A549 (cell line): ENCODE measurements at regions of chr20 and their contacts with region 1.

Region 1: DNA sequence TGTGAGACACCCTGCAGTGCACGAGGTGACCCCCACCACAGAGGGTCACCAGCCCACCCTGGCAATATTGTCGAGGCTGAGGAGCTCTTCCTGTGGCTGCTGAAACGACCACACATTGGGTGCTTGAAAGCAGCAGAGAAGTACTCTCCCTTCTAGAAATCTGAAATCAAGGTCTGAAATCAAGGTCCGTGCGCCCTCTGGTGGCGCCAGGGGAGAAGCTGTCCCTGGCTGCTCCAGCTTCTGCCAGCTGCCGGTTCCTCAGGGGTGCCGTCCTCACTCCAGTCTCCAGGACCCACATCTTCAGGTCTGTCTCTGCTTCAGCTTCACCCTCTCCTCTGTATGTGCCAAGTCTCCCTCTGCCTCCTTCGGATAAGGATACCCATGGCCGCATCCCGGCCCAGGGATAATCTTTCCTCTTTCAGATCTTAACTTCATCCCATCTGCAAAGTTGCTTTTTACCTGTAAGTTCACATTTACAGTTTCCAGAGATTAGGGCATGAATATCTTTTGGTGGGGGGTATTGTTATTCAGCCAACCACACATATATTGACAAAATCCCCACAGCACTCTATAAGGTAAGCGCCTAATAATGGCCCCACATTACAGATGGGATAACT is 108.3 kb upstream of the PHACTR3 start:
- DNase-seq: peak; percentile 67 to 71
- ATAC-seq: peak; percentile 91 to 95
- H3K4me3 ChIP-seq: no peak overlapping the region
- H3K27ac ChIP-seq: no peak overlapping the region
- H3K4me1 ChIP-seq: no peaks in the 10 kb centered on the region
- CTCF ChIP-seq: peak; percentile 85
- EP300 ChIP-seq: no peak
- POLR2A ChIP-seq: no peak
- RAD21 ChIP-seq: peak; percentile 70 to 74

Region 2: DNA sequence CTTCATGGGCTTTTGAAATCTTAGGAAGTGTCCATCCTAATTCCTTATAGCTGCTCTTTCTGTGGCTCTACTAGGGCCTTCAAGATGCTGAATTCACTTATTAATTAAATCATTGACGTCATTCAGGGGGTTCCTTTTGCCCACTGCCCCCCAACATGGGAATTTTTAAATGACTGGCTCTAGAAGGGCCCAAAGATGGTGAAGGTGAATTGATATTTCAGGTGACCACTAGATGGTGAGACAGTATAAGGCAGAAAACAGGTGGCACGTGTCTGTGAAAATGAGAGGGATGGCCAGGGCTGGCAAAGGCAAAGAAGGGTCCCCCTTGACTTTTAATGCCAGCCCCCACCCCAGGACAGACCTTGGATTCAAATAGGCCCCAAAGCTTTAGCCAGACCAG is 631.7 kb before region 1 on chr20:
- CTCF ChIA-PET with region 1: interaction called, 31 read pairs
- POLR2A ChIA-PET with region 1: no interaction called
- DNase-seq: no peak
- ATAC-seq: peak; percentile 57 to 77; a peak in 3 of 6 replicates
- H3K4me3 ChIP-seq: no peak overlapping the region
- H3K27ac ChIP-seq: no peak overlapping the region
- H3K4me1 ChIP-seq: no peaks in the 10 kb centered on the region
- CTCF ChIP-seq: peak; percentile 40
- EP300 ChIP-seq: no peak
- POLR2A ChIP-seq: no peak
- RAD21 ChIP-seq: peak; percentile 59 to 63

Region 3: DNA sequence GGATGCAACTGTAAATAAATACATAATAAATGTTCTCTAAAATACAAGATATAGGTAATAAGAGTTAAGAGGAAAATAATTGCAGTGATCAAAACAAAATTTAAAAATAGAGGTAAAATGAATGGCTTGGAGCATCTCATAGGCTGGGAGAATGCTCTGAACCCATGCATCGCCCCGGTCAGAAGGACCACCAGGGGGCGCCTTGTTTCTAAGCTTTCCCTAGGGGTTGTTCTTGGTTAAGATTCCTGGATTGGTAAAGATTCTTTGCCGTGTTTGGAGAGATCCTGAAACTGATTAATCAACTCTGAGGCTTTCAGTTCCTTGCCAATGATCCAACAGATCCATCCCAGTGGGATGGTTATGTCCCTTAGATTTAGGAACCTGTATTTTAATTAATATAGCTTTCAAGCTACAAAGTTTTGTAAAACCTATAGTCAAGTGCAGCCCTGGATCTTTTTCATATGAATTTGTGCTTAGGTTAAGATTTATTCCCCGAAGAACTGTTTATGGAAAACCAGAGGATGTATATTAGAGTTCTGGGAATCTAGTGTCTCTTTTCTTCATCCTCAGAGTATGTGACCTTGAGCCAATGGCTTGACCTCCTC is 408.1 kb before region 1 on chr20:
- CTCF ChIA-PET with region 1: interaction called, 10 read pairs
- POLR2A ChIA-PET with region 1: no interaction called
- DNase-seq: peak; percentile 66 to 70
- ATAC-seq: peak; percentile 89 to 97; a peak in 5 of 6 replicates
- H3K4me3 ChIP-seq: no peak overlapping the region
- H3K27ac ChIP-seq: no peak overlapping the region
- H3K4me1 ChIP-seq: no peaks in the 10 kb centered on the region
- CTCF ChIP-seq: peak; percentile 84
- EP300 ChIP-seq: no peak
- POLR2A ChIP-seq: no peak
- RAD21 ChIP-seq: peak; percentile 83 to 88

Region 4: DNA sequence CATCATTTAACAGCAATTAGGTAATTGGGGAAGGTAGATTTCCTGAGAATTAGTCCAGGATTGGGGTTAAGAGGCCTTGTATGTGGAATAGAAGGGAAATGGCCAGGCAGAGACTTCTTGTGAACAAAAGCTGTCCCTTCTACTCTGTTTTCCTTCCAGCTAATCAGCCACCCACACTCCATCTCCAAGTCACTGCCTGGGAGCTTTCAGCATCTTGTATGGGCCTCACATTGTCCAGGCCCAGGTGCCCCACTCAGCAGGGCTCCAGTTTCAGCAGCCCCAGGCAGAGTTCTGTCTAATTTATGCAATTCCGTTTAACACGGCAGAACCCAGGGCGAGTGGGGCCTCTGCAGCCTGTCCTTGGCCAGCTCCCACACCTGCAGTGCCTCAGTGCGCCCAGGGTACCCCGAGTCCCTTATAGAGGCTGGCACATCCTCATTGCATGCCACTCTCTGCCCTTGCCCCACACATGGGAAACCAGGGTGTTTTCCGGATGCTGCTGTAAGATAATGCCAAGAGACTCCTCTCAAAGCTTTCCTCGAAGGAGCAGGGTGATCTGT is 82.6 kb before region 1 on chr20:
- CTCF ChIA-PET with region 1: no interaction called
- POLR2A ChIA-PET with region 1: no interaction called
- DNase-seq: no peak
- ATAC-seq: no peak
- H3K4me3 ChIP-seq: no peak overlapping the region
- H3K27ac ChIP-seq: no peak overlapping the region
- H3K4me1 ChIP-seq: no peaks in the 10 kb centered on the region
- CTCF ChIP-seq: no peak
- EP300 ChIP-seq: no peak
- POLR2A ChIP-seq: no peak
- RAD21 ChIP-seq: no peak

Region 5: DNA sequence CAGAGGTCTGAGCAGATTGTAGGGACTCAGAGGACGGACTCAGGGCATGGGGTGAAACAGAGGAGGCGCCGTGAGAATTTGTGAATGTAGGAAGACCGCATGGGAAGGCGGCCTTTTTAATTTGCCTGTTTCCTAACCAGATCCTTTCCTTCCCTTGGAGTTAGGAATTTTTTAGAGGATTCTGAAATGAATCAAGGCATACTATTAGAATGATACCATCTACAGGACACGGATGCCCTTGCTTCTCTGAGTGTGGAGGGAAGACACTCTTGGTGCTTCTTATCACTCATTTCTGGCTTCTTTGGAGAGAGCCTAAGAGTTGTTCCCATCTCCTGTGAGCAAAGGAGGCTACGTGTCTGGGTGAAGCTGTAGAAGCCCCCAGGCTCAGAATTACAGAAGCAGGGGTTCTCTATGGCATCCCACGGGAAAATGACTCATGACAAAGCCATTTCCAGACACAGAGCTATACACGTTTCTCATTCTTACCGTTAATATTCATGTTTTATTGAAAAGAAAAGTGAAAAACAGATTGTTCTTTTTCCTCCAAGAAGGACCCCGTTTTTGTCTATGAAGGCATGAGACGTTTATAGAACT is 47.1 kb before region 1 on chr20:
- CTCF ChIA-PET with region 1: interaction called, 10 read pairs
- POLR2A ChIA-PET with region 1: no interaction called
- DNase-seq: no peak
- ATAC-seq: no peak
- H3K4me3 ChIP-seq: no peak overlapping the region
- H3K27ac ChIP-seq: no peak overlapping the region
- H3K4me1 ChIP-seq: no peaks in the 10 kb centered on the region
- CTCF ChIP-seq: no peak
- EP300 ChIP-seq: no peak
- POLR2A ChIP-seq: no peak
- RAD21 ChIP-seq: no peak

Region 6: DNA sequence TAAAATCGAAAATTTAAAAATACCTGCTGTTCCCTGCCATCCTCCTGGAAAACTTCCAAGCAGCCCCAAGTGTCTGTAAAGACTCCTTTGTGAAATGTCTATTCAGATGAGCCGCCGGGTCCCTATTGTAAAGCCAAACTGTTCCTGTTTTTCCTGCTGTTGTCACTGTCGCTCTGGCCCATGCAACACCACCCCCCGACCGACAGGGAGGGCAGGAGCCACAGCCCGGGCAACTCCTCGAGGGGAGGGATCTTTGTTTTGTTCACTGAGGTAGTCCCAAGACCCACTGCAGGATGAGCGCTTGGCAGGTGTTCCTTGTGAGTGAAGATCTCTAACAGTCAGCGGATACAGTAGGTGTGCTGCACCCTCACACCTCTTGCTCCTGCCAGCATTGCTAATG is 23.9 kb before region 1 on chr20:
- CTCF ChIA-PET with region 1: interaction called, 19 read pairs
- POLR2A ChIA-PET with region 1: no interaction called
- DNase-seq: no peak
- ATAC-seq: no peak
- H3K4me3 ChIP-seq: no peak overlapping the region
- H3K27ac ChIP-seq: no peak overlapping the region
- H3K4me1 ChIP-seq: no peaks in the 10 kb centered on the region
- CTCF ChIP-seq: no peak
- EP300 ChIP-seq: no peak
- POLR2A ChIP-seq: no peak
- RAD21 ChIP-seq: no peak

Region 7: DNA sequence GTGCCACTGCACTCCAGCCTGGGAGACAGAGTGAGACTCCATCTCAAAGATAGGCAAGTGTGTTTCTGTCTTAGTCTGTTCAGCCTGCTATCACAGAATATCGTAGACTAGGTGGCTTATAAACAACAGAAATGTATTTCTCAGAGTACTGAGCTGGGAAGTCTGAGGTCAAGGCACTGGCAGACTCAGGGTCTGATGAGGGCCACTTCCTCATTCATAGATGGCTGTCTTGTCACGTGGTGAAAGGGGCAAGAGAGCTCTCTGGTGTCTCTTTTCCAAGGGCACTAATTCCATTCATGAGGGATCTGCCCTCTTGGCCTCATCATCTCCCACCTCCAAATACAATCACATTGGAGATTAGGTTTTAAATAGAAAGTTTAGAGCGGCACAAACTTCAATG is 12.7 kb after region 1 on chr20:
- CTCF ChIA-PET with region 1: interaction called, 27 read pairs
- POLR2A ChIA-PET with region 1: no interaction called
- DNase-seq: no peak
- ATAC-seq: no peak
- H3K4me3 ChIP-seq: no peak overlapping the region
- H3K27ac ChIP-seq: no peak overlapping the region
- H3K4me1 ChIP-seq: no peaks in the 10 kb centered on the region
- CTCF ChIP-seq: no peak
- EP300 ChIP-seq: no peak
- POLR2A ChIP-seq: no peak
- RAD21 ChIP-seq: no peak